ENCODE measurements at regions of chr7 and their contacts with region 1.

Region 1: DNA sequence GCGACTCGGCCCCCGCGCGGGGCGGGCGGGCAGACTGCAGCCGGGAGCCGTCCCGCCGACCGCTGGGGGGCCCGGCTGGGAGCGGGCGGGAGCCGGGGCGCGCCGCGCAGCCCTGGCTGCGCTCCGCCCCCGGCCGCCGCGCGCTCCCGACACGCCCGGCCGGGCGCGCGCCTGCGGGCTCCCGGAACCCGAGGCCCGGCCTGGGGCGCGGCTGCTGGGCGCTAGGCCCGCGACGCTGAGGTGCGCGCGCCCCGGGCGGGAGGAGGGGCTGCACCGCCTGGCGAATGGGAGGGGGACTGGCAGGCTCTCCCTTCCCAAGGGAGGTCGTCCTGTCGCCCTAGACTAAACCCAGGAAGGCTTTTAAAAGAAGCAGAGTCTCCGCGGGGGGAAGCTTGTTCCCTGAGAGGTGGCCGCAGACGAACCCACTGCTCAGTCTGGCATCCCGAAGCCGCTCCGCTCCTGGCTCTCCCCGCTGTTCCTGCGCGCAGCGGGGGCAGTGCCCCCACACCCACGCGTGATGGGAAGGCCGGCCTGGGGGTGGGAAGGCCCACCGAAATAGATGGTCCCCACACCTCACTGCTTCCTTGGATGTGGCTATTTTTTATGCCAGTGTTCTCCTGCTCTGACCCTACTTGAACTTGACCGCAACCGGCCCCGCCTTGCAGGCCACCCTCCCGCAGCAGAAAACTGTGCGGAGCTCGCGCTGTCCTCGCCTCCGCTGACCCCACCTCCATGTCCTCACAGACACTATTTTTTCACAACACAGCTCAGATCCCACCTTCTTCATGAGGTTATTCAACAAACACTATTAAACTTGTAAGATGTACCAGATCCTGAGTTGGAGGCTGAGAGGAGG is at the start of gene VOPP1:
- DNase-seq: peak; percentile 89
- CTCF ChIP-seq: no peak

Region 2: DNA sequence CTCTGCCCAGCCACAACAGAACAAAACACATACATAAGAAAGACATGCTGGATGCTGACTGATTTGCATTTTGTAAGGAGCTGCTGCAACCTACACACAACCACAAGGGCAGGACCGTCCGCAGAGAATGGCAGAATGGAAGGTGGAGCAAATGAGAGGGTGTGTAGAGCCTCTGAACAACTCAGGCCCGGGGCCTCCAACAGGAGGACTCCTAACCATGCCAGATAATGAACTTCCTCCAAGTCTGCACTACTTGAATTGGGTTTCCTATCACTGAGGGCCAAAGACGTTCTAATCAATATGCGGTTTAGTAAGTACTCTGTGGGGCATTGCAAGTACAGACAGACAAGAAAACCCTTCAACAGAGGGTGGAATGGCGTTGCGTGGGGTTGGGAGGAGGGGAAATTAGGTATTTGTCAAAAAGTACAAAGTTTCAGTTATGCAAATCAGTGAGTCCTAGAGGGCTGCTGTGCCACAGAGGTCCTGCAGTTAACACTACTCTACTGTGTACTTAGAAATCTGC is 14.9 kb before region 1 on chr7:
- CTCF ChIA-PET with region 1: interaction called, 19 read pairs
- POLR2A ChIA-PET with region 1: interaction called, 3 read pairs
- DNase-seq: peak; percentile 76
- CTCF ChIP-seq: no peak

Region 3: GRCh38 chr7:55588379-55588699 is 15.7 kb after region 1 on chr7:
- CTCF ChIA-PET with region 1: interaction called, 18 read pairs
- POLR2A ChIA-PET with region 1: no interaction called
- DNase-seq: peak; percentile 8
- CTCF ChIP-seq: no peak

Region 4: GRCh38 chr7:55593515-55594318 is 21.1 kb after region 1 on chr7:
- CTCF ChIA-PET with region 1: interaction called, 18 read pairs
- POLR2A ChIA-PET with region 1: no interaction called
- DNase-seq: peak; percentile 71
- CTCF ChIP-seq: peak; percentile 94